ENCODE measurements at regions of chr3 and their contacts with region 1.

Region 1: GRCh38 chr3:43503067-43503728 is 118.6 kb downstream of the ANO10 start:
- DNase-seq: no peak
- ATAC-seq: peak; percentile 31
- H3K4me3 Mint-ChIP-seq: no peak overlapping the region
- H3K27ac Mint-ChIP-seq: peak overlapping the region; percentile 58
- H3K4me1 Mint-ChIP-seq: peaks cover 64% of the 10 kb centered on the region
- H3K27me3 Mint-ChIP-seq: no peaks in the 10 kb centered on the region
- CTCF ChIP-seq: peak; percentile 62

Region 2: GRCh38 chr3:43155464-43156121 is 347.6 kb before region 1 on chr3:
- CTCF ChIA-PET with region 1: interaction called, 28 read pairs
- POLR2A ChIA-PET with region 1: no interaction called
- intact Hi-C with region 1: loop called (anchors 5 kb)
- DNase-seq: no peak
- ATAC-seq: no peak
- H3K4me3 Mint-ChIP-seq: no peak overlapping the region
- H3K27ac Mint-ChIP-seq: no peak overlapping the region
- H3K4me1 Mint-ChIP-seq: peaks cover 19% of the 10 kb centered on the region
- H3K27me3 Mint-ChIP-seq: no peaks in the 10 kb centered on the region
- CTCF ChIP-seq: no peak

Region 3: GRCh38 chr3:43162230-43163084 is 340.7 kb before region 1 on chr3:
- CTCF ChIA-PET with region 1: interaction called, 28 read pairs
- POLR2A ChIA-PET with region 1: interaction called, 5 read pairs
- intact Hi-C with region 1: loop called (anchors 5 kb)
- DNase-seq: peak; percentile 49
- ATAC-seq: peak; percentile 75
- H3K4me3 Mint-ChIP-seq: peak overlapping the region; percentile 65
- H3K27ac Mint-ChIP-seq: peak overlapping the region; percentile 96
- H3K4me1 Mint-ChIP-seq: peaks cover 20% of the 10 kb centered on the region
- H3K27me3 Mint-ChIP-seq: no peaks in the 10 kb centered on the region
- CTCF ChIP-seq: peak; percentile 58

Region 4: DNA sequence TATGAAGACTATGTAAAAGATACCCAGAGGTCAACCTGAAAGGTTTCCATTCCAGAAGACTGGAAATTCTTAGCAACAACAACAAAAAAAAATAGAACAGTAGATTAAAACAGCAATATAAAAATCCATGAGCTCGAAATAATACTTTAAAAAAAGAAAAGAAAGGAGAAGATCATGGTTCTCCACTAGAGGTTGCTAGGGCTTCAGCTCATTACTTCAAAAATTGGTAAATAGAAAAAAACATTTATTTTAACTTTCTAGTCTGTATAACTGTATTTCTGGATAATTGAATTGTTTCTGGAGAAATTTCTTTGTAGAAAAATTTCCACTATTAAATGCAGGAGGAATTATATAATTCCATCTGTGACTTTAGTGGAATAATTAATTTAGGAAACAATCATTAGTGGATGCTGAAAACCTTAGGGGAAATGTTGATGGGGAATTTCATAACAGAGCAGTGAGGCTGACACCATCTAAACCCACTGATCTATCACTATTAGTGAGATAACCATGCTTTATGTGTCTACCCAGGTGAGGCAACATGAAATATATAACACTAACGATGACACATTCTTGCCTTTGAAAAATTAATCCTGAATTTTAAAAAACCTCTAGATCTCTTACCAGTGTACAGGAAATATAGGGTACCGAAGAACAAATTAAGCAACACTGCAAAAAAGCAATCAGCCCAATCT is 279.4 kb before region 1 on chr3:
- CTCF ChIA-PET with region 1: interaction called, 12 read pairs
- POLR2A ChIA-PET with region 1: no interaction called
- intact Hi-C with region 1: loop called (anchors 5 kb)
- DNase-seq: no peak
- ATAC-seq: peak; percentile 45
- H3K4me3 Mint-ChIP-seq: no peak overlapping the region
- H3K27ac Mint-ChIP-seq: peak overlapping the region; percentile 54
- H3K4me1 Mint-ChIP-seq: peaks cover 51% of the 10 kb centered on the region
- H3K27me3 Mint-ChIP-seq: no peaks in the 10 kb centered on the region
- CTCF ChIP-seq: peak; percentile 67

Region 5: GRCh38 chr3:43296565-43296964 is 206.6 kb before region 1 on chr3:
- CTCF ChIA-PET with region 1: interaction called, 5 read pairs
- POLR2A ChIA-PET with region 1: no interaction called
- intact Hi-C with region 1: loop called (anchors 10 kb)
- DNase-seq: peak; percentile 79
- ATAC-seq: peak; percentile 86
- H3K4me3 Mint-ChIP-seq: peak overlapping the region; percentile 70
- H3K27ac Mint-ChIP-seq: peak overlapping the region; percentile 91
- H3K4me1 Mint-ChIP-seq: peaks cover 71% of the 10 kb centered on the region
- H3K27me3 Mint-ChIP-seq: no peaks in the 10 kb centered on the region
- CTCF ChIP-seq: no peak

Region 6: DNA sequence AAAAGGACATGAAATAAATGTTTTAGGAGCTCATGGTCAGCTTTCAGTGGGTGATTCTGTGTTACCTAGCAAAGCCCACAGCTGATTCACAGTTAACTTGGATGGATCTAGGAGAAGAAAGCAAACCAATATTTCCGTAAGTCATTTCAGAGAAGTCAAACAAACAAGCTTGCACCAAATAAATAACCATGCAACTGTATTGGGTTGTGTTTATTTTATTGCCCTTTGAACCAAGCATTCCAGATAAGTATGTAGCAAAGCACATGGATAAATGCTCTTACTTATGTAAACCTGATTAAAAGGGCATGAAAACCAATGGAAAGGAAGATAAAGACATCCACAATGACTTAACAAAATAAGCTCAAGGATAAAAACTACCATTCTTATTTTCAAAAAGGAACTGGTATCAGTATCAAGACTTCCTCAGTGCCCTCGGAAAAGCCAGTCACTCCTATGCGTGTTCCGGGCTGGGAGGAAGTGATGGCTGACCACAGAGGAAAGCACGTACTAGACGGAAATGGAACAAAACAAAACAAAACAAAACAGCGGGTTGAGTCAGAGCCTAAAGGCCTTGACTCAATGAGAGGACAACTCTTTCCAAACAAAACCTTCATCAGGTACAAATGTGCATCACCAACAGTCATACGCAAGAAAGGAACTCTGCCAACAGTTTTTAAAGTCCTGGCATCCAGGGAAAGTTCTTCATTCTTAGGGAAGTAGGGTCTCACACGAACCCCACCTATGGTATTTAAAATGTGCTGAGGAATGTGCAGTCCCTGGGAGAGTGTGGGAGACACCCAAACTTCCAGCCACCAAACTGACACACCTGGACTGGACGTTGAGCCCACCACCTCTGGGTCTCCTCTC is 113.6 kb before region 1 on chr3:
- CTCF ChIA-PET with region 1: interaction called, 5 read pairs
- POLR2A ChIA-PET with region 1: interaction called, 3 read pairs
- intact Hi-C with region 1: loop called (anchors 10 kb)
- DNase-seq: peak; percentile 85
- ATAC-seq: peak; percentile 93
- H3K4me3 Mint-ChIP-seq: peak overlapping the region; percentile 44
- H3K27ac Mint-ChIP-seq: peak overlapping the region; percentile 93
- H3K4me1 Mint-ChIP-seq: peaks cover 63% of the 10 kb centered on the region
- H3K27me3 Mint-ChIP-seq: no peaks in the 10 kb centered on the region
- CTCF ChIP-seq: no peak

Region 7: DNA sequence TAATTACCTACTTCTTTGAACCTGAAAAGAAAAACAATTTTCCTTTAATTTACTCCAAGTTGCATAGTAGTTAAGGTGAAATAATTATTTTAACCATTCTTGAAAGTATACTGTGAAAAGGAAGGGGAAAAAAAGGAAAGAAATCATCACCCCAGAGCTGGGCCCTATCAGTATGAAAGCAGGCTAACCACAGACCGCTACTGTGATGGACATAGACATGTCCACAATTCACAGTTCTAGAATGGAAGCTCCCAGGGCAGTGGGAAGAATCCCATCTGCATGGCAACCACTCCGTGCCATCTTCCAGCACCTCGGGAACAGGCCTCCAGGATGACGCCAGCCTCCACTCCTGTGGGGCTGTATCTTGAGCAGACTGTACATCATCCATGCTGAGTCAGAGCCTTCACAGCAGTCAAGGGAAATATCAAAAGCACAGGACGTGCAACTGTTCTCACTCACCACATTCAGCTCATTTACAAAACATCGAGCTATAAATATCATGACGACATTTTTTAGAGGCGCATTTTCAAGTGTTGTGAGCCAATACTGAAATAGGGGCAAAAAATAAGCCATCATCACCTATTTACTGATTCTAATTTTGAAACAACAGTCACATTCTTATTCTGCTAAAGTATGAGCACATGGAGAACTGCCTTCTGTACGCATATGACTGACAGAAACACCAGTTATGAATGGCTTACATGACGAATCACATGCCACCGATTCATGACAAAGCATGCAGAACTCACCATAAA is 97.1 kb before region 1 on chr3:
- CTCF ChIA-PET with region 1: interaction called, 14 read pairs
- POLR2A ChIA-PET with region 1: no interaction called
- intact Hi-C with region 1: no loop called
- DNase-seq: no peak
- ATAC-seq: peak; percentile 39
- H3K4me3 Mint-ChIP-seq: no peak overlapping the region
- H3K27ac Mint-ChIP-seq: no peak overlapping the region
- H3K4me1 Mint-ChIP-seq: no peaks in the 10 kb centered on the region
- H3K27me3 Mint-ChIP-seq: no peaks in the 10 kb centered on the region
- CTCF ChIP-seq: no peak

Region 8: GRCh38 chr3:43484926-43485488 is 18.2 kb before region 1 on chr3:
- CTCF ChIA-PET with region 1: no interaction called
- POLR2A ChIA-PET with region 1: no interaction called
- intact Hi-C with region 1: no loop called
- DNase-seq: no peak
- ATAC-seq: no peak
- H3K4me3 Mint-ChIP-seq: no peak overlapping the region
- H3K27ac Mint-ChIP-seq: no peak overlapping the region
- H3K4me1 Mint-ChIP-seq: peaks cover 18% of the 10 kb centered on the region
- H3K27me3 Mint-ChIP-seq: no peaks in the 10 kb centered on the region
- CTCF ChIP-seq: no peak

Region 9: GRCh38 chr3:43559963-43560362 is 56.8 kb after region 1 on chr3:
- CTCF ChIA-PET with region 1: no interaction called
- POLR2A ChIA-PET with region 1: no interaction called
- intact Hi-C with region 1: no loop called
- DNase-seq: no peak
- ATAC-seq: no peak
- H3K4me3 Mint-ChIP-seq: no peak overlapping the region
- H3K27ac Mint-ChIP-seq: no peak overlapping the region
- H3K4me1 Mint-ChIP-seq: no peaks in the 10 kb centered on the region
- H3K27me3 Mint-ChIP-seq: no peaks in the 10 kb centered on the region
- CTCF ChIP-seq: no peak

Region 10: DNA sequence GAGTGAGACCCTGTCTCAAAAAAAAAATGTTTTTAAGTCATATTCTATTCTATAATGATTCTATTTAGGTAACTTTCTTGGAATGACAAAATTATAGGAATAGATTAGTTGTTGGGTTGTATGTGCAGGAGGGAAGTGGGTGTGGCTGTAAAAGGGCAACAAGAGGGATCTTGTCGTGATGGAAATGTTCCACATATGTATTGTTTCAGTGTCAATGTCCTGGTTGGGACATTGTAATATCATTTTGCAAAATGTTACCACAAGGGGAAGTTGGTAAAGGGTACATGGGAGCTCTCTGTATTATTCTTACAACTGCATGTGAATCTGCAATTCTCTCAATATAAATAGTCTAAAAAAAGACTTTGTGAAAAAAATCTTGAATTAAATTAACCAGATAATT is 173.2 kb after region 1 on chr3:
- CTCF ChIA-PET with region 1: no interaction called
- POLR2A ChIA-PET with region 1: no interaction called
- intact Hi-C with region 1: no loop called
- DNase-seq: no peak
- ATAC-seq: no peak
- H3K4me3 Mint-ChIP-seq: no peak overlapping the region
- H3K27ac Mint-ChIP-seq: no peak overlapping the region
- H3K4me1 Mint-ChIP-seq: no peaks in the 10 kb centered on the region
- H3K27me3 Mint-ChIP-seq: no peaks in the 10 kb centered on the region
- CTCF ChIP-seq: no peak